Posterior vena cava (tissue), 2 donors: ENCODE measurements at regions of chr19 and their contacts with region 1.

Region 1: DNA sequence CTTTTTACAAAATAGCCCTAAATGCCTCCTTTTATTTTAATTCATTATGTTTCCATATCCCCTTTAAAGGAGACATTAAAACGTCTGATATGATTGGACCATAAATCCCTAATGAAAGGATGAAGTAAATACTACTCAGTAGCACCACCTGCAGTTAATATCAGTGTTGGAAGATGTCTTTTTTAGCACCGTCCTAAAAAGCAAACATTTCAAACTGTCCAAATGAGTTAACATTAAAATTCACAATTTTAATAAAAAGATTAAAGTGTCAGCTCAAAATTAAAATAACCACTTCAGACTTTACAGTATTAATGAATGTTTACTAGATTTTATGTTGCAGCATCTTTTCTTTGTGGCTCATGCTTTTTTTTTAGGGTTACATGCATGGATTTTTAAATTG is 12.3 kb downstream of the ZNF507 start:
- DNase-seq: no peak

Region 2: GRCh38 chr19:32339988-32340874 is 17.5 kb before region 1 on chr19:
- intact Hi-C with region 1: no loop called
- DNase-seq: peak; percentile 85

Region 3: GRCh38 chr19:32405431-32406161 is 47.9 kb after region 1 on chr19 and contains the start of gene DPY19L3:
- intact Hi-C with region 1: loop called in 1 of 2 experiments (anchors 10 kb)
- DNase-seq: peak; percentile 99
- total RNA-seq, gene DPY19L3: 21.6 to 29.0 TPM

Region 4: DNA sequence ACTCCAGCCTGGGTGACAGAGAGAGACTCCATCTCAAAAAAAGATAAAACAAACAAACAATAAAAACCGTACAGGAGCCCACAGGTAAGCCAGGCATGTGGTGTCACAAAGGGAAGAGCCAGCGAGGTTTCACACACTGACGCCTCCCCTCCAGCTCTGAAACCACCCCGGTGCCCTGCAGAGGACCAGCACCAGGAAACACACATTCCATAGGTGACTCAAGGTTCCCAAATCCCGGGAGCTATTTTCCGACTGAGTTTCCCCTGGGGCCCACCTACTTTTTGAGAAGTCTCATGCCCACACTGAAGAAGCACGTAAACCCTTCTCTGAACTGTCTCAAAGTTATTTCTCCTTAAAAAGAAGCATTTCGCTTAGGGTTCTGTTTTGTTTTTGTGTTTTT is 666.7 kb after region 1 on chr19:
- intact Hi-C with region 1: no loop called
- DNase-seq: no peak